Psoas muscle (tissue), 8 donors: ENCODE measurements at regions of chr2 and their contacts with region 1.

Region 1: DNA sequence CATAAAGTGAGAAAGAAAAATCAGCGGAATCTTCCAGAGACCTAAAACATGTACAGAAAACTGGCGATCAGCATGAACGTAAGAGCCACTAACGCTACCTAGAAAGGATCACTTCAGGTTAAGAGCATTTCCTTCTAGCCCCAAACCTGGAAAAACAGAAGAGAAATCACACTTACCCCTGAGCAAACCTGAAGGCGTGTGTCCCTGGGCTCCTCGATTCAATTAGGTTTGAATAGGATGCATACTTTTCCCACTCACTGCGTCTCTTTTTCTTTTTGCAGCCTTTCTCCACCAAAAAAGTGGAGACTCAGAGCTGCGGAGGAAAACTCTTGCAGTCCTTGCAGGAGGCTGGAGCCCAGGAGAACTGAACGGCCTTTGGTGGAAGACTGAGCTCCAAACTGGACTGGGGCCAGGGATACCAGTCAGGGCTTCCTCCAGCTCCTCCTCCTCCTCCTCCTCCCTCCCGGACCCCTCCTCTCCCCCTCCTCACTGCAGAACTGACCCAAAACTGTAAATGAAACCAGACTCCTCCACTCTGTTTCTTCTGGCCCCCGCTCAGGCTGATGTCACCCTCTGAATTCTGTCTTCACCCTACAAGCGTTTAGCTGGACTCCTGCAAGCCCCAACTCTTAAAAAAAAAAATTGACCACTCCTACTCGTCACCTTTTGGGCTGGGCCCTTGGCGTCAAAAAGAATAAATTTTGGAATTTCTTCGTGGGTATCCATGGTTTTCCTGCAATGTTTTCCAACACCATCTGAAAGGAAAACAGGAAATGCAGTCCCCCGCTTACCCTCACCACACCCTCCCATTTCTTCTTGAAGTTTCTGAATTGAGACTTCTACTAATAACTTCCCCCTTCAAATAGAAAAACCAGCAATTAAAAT is at the start of gene COL6A3:
- DNase-seq: peak; percentile 80 to 88
- ATAC-seq: peak in 3 of 4 donors; percentile 49 to 59 (median 50)
- H3K4me3 ChIP-seq: peak within 1 kb of the TSS; percentile 59
- H3K27ac ChIP-seq: peak within 1 kb of the TSS; percentile 58
- H3K4me1 ChIP-seq: peaks cover 5% of the 10 kb centered on the region
- H3K27me3 ChIP-seq: no peaks in the 10 kb centered on the region
- CTCF ChIP-seq: no peak
- total RNA-seq, gene COL6A3: 59.1 to 75.2 (median 71.4) TPM

Region 2: DNA sequence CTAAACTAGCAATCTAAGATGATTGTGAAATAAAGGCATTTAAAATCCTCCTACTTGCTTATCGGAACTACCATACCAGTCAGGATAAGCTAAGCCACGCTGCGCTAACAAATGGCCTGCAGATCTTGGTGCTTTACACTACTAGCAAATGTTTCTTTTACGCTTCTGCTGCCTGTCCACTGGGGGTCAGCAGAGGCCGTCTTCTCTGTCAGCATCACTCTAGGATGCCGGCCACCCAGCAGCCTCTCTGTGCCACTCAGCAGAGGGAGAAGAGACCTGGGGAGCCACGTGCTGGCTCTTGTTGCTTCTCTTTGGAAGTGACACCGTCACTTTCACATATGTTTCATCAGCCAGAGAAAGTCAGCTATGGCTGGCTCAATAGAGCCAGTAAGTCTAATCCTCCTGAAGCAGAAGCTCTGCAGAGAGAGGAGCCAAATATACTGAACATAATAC is 291.8 kb before region 1 on chr2:
- intact Hi-C with region 1: loop called in 1 of 2 experiments (anchors 2 kb)
- DNase-seq: peak; percentile 69 to 87
- ATAC-seq: peak; percentile 78 to 90 (median 88)
- H3K4me3 ChIP-seq: no peak overlapping the region
- H3K27ac ChIP-seq: no peak overlapping the region
- H3K4me1 ChIP-seq: no peaks in the 10 kb centered on the region
- H3K27me3 ChIP-seq: no peaks in the 10 kb centered on the region
- CTCF ChIP-seq: peak; percentile 66

Region 3: DNA sequence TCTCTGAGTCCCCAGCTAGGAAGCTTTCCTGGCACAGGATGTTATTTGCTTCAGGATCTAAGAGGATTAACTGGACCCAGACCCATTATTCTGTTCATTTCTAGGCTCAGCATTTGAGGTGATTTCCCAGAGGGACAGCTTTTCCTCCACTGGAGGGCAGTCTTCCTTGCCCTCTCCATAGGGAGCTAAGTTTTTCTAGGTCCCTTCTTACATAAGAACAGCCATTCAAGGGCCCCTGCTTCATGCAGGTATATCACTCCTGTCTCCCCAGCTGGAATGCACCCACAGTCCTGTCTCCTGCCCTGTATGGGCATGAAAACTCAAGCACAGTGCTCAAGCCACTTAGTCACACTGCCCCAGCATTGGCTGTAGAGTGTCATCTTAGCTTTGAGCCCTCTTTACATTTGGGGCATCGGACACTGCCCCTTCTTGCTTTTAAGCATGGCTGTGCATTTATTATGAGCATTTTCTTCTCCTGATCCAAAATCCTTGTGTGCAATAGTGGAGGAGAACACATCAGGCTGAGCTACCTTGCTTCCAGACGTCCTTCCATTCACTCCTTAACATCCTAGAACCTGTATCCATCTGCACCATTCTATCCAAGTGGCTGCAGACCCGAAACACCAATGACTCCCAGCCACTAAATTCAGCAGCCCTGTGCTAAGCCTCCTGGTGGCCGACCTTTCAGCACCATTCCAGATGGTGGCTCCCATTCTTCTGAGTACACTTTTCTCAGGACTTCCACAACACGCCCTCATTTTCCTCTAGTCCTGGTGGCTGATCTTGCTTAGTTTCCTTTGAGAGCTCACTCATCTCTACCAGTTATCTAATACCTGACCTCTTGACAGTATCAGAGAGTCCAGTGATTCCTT is 248.4 kb before region 1 on chr2:
- intact Hi-C with region 1: loop called (anchors 5 kb)
- DNase-seq: no peak
- ATAC-seq: peak in 1 of 4 donors; percentile 55
- H3K4me3 ChIP-seq: no peak overlapping the region
- H3K27ac ChIP-seq: no peak overlapping the region
- H3K4me1 ChIP-seq: no peaks in the 10 kb centered on the region
- H3K27me3 ChIP-seq: no peaks in the 10 kb centered on the region
- CTCF ChIP-seq: peak; percentile 43